ENCODE measurements at regions of chr6 and their contacts with region 1.

Region 1: DNA sequence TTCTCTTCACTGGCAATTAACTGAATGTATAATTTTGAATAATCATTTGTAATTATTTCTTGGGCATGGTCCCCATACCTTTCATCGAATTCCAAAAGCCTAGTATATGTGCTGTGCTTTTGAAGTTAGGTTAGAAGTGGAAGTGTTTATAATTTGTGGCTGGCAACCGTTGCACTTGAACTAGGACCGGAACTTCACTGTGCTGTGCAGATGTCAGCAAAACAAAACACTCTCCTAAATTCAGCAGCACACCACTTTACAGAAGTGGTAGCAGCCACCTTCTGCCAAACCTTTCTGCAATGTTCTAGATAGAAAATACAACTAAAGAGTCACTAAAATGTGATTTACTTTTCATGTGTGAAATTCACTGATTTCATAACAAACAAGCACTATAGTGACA is 111.9 kb downstream of the FAM83B start:
- DNase-seq: no peak
- H3K4me3 ChIP-seq: no peak overlapping the region
- H3K27ac ChIP-seq: no peak overlapping the region
- H3K4me1 ChIP-seq: no peaks in the 10 kb centered on the region
- H3K27me3 ChIP-seq: no peaks in the 10 kb centered on the region
- CTCF ChIP-seq: no peak
- POLR2A ChIP-seq: no peak

Region 2: GRCh38 chr6:54935739-54936138 is 22.7 kb before region 1 on chr6:
- intact Hi-C with region 1: loop called (anchors 2 kb)
- DNase-seq: no peak
- H3K4me3 ChIP-seq: no peak overlapping the region
- H3K27ac ChIP-seq: no peak overlapping the region
- H3K4me1 ChIP-seq: no peaks in the 10 kb centered on the region
- H3K27me3 ChIP-seq: no peaks in the 10 kb centered on the region
- CTCF ChIP-seq: no peak
- POLR2A ChIP-seq: no peak

Region 3: DNA sequence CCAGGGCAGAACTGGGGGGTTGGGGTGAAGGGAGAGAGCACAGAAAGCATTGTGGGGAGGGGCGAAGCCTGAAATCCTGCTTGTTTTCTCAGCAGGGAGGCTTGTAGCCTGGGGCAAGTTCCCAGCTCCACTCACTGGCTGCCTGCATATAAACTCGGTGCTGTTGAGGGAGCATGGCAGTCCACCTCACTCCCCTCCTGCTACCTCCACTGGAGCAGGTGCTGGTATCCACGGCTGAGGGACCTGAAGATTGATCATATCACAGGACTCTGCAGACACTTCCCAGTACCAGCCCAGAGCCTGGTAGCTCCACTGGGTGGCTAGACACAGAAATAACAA is 150.3 kb after region 1 on chr6:
- intact Hi-C with region 1: no loop called
- DNase-seq: no peak
- H3K4me3 ChIP-seq: no peak overlapping the region
- H3K27ac ChIP-seq: no peak overlapping the region
- H3K4me1 ChIP-seq: no peaks in the 10 kb centered on the region
- H3K27me3 ChIP-seq: no peaks in the 10 kb centered on the region
- CTCF ChIP-seq: no peak
- POLR2A ChIP-seq: no peak

Measured in vagina (tissue), 2 donors.